ENCODE measurements at regions of chr11 and their contacts with region 1.

Region 1: DNA sequence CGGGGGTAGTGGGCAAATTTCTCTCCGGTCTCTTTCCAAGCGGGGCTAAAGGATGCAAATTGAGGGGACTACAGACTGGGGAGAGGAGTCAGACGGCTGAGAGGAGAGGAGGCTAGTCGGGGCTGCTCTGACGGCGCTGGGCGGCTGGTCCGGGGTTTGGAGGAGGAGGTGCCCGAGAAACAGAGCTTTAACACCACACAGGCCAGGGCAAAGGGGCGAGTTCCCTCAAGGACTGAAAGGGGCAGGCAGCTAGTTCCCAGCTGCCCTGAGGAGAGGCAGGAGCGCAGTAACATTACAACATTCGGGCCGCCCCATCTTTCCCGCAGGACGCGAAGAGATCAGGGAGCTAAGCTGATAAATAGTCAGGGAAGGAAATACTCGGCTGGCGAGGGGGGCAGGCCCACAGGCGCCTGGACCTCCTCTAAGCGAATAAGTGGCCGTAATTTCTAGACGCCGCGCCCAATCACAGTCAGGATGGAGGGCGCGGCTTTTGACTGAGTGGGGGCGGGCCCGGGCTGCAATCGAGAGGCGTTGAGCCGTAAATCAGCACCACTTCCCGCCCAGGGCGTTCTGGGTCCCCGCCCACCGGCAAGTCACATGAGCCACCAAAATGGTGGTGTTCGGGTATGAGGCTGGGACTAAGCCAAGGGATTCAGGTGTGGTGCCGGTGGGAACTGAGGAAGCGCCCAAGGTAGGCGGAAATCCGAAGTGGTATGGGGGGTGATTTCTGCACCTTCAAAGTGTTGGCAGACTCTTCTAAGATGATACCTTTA is at the start of gene TMEM126B:
- DNase-seq: peak; percentile 99
- H3K4me3 Mint-ChIP-seq: peak within 1 kb of the TSS; percentile 96
- H3K27ac Mint-ChIP-seq: peak within 1 kb of the TSS; percentile 95
- H3K4me1 Mint-ChIP-seq: peaks cover 43% of the 10 kb centered on the region
- H3K27me3 Mint-ChIP-seq: peaks cover 2% of the 10 kb centered on the region
- total RNA-seq, gene TMEM126B: 52.2 and 54.4 TPM in 2 replicates

Region 2: GRCh38 chr11:85595285-85595884 is 32.8 kb before region 1 on chr11:
- intact Hi-C with region 1: loop called (anchors 2 kb)
- DNase-seq: peak; percentile 65
- H3K4me3 Mint-ChIP-seq: no peak overlapping the region
- H3K27ac Mint-ChIP-seq: no peak overlapping the region
- H3K4me1 Mint-ChIP-seq: no peaks in the 10 kb centered on the region
- H3K27me3 Mint-ChIP-seq: peaks cover 15% of the 10 kb centered on the region

Region 3: DNA sequence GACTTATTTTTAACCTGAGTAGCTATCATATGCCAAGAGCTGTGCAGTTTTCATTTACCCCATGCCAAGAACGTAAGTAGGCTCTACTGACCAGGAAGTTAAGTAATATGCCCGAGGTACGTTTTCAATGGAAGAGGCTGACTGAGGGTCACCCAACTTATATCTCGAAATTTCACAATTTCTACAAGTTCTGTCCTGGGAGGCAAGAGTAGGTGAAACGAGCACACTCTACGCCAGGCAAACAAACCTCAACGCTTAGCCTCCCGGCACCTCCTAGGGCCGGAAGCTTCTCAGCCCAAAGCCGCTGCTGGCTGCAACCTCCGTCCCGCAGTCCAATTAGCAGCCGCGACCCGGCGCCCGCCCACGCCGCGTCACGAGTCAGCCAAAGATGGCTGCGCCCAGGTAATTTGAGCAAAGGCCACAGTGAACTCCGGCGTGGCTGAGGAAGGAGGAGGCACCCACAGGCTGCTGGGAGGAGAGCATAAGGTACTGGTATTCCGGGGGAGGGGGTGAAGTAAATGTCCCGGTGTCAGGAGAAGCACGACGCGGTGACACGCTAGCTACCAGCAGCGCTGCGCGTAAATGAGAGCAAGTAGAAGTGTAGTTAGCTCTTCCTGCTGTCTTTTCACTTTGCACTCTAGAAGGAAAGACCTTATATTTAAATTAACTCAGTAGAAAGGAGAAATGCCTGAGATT is 19.6 kb after region 1 on chr11 and contains the start of gene TMEM126A:
- intact Hi-C with region 1: loop called (anchors 1 kb)
- DNase-seq: peak; percentile 97
- H3K4me3 Mint-ChIP-seq: peak within 1 kb of the TSS; percentile 98
- H3K27ac Mint-ChIP-seq: peak within 1 kb of the TSS; percentile 98
- H3K4me1 Mint-ChIP-seq: peaks cover 15% of the 10 kb centered on the region
- H3K27me3 Mint-ChIP-seq: peaks cover 23% of the 10 kb centered on the region
- total RNA-seq, gene TMEM126A: 52.1 and 52.5 TPM in 2 replicates

Region 4: DNA sequence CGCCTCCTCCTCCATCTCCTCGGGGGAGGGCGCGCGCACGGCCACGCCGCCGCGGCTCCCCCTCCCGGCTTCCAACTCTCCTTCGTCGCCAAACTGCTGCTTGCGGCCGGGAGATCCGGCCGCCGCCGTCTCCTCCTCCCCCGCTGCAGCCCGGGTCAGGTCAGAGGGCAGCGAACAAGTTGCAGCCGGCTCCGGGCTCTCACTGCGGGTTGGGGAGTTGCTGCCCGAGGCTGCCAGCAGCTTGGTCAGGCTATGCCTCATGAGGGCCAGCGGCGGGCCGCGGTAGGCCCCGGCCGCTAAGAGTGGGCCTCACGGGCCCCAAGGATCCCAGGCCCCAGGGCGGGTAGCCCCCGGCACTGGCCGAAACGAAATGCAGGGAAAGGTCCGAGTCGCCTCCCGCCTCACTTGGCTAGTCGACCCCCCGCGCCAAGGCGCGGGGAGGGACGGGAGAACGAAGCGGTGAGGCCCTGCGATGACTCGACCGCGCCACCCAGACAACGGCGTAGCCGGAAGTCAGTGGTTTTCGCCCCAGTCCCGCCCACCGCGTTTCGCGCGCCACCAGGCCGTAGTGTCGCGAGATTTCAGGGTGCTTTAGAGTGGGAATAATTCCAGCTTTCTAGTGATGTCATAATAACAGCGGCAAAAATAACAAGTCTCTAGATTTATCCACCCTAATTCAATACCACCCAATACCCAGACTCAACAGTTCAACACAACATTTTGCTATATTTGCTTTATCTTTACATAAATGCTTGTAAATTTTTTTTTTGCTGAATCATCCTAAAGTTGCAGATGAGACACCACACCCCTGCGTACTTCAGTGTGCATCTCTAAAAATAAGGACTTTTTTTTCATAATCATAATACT is 36.7 kb after region 1 on chr11 and contains the start of gene CREBZF:
- intact Hi-C with region 1: loop called (anchors 1 kb)
- DNase-seq: peak; percentile 98
- H3K4me3 Mint-ChIP-seq: peak within 1 kb of the TSS; percentile 97
- H3K27ac Mint-ChIP-seq: peak within 1 kb of the TSS; percentile 99
- H3K4me1 Mint-ChIP-seq: peaks cover 29% of the 10 kb centered on the region
- H3K27me3 Mint-ChIP-seq: peaks cover 2% of the 10 kb centered on the region
- total RNA-seq, gene CREBZF: 50.9 and 54.5 TPM in 2 replicates

Region 5: GRCh38 chr11:85752890-85753581 is 124.9 kb after region 1 on chr11:
- intact Hi-C with region 1: loop called (anchors 2 kb)
- DNase-seq: peak; percentile 97
- H3K4me3 Mint-ChIP-seq: peak overlapping the region; percentile 78
- H3K27ac Mint-ChIP-seq: peak overlapping the region; percentile 97
- H3K4me1 Mint-ChIP-seq: peaks cover 88% of the 10 kb centered on the region
- H3K27me3 Mint-ChIP-seq: peaks cover 2% of the 10 kb centered on the region

Region 6: GRCh38 chr11:86302100-86302793 is 674.1 kb after region 1 on chr11 and contains the start of gene HIKESHI:
- intact Hi-C with region 1: loop called (anchors 1 kb)
- DNase-seq: peak; percentile 96
- H3K4me3 Mint-ChIP-seq: peak within 1 kb of the TSS; percentile 99
- H3K27ac Mint-ChIP-seq: peak within 1 kb of the TSS; percentile 98
- H3K4me1 Mint-ChIP-seq: peaks cover 19% of the 10 kb centered on the region
- H3K27me3 Mint-ChIP-seq: peaks cover 2% of the 10 kb centered on the region
- total RNA-seq, gene HIKESHI: 54.0 and 62.4 TPM in 2 replicates